IMR-90 (cell line): ENCODE measurements at regions of chr12 and their contacts with region 1.

Region 1: GRCh38 chr12:2284857-2285256 is 232.1 kb downstream of the CACNA1C start:
- DNase-seq: peak; percentile 73
- ATAC-seq: peak; percentile 77
- H3K4me3 ChIP-seq: no peak overlapping the region
- H3K27ac ChIP-seq: peak overlapping the region; percentile 64
- H3K4me1 ChIP-seq: peaks cover 44% of the 10 kb centered on the region
- H3K27me3 ChIP-seq: no peaks in the 10 kb centered on the region
- CTCF ChIP-seq: peak; percentile 72
- POLR2A ChIP-seq: no peak
- RAD21 ChIP-seq: peak; percentile 77

Region 2: DNA sequence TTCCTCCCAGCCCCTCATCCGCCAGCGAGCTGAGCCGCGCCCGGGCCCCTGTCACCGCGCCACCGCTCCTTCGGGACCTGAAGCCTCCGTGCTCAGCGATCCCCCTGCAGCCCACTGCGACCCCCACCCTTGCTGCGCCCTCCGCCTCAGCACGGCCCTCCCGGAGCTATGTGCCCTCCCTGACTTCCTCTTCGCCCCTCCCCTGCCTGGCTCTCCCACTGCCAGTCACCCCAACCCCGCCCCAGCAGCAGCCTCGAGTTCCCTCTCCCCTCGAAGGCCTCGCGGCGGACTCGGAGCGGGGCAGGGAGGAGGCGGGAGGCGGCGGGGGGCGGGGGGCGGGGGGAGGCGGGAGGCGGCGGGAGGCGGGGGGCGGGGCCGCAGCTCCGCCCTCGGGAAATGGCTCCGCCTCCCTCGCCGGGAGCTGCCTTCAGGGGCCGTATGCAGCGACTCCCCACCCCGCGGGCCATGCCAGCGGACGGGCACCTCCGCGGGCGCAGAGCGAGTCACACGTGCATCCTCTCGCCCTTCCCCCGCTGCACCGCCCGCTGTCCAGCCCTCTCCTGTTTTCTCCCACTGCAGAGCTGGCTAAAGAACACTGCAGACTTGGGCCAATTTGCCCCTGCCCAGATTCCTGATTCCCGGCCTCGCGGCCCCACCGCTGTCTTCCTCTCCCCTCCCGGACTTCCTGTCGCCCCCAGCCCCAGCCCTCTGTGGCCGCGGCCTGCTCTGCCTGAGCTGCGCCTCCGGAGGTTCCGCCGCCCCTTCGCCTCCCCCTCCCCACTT is 623.1 kb before region 1 on chr12:
- CTCF ChIA-PET with region 1: interaction called, 5 read pairs
- POLR2A ChIA-PET with region 1: no interaction called
- dilution Hi-C with region 1: no loop called
- in situ Hi-C with region 1: loop called (anchors 25 kb)
- intact Hi-C with region 1: no loop called
- DNase-seq: peak; percentile 82
- ATAC-seq: peak; percentile 92
- H3K4me3 ChIP-seq: peak overlapping the region; percentile 45
- H3K27ac ChIP-seq: peak overlapping the region; percentile 5; the same call in 1 of the 2 replicates
- H3K4me1 ChIP-seq: peaks cover 2% of the 10 kb centered on the region; the same call in 1 of the 2 replicates
- H3K27me3 ChIP-seq: no peaks in the 10 kb centered on the region; the same call in 1 of the 2 replicates
- CTCF ChIP-seq: no peak
- POLR2A ChIP-seq: no peak
- RAD21 ChIP-seq: peak; percentile 9; the same call in 1 of the 2 replicates

Region 3: GRCh38 chr12:1939801-1940607 is 344.9 kb before region 1 on chr12:
- CTCF ChIA-PET with region 1: interaction called, 4 read pairs
- POLR2A ChIA-PET with region 1: no interaction called
- dilution Hi-C with region 1: no loop called
- in situ Hi-C with region 1: no loop called
- intact Hi-C with region 1: loop called (anchors 10 kb)
- DNase-seq: peak; percentile 78
- ATAC-seq: peak; percentile 83
- H3K4me3 ChIP-seq: no peak overlapping the region
- H3K27ac ChIP-seq: no peak overlapping the region
- H3K4me1 ChIP-seq: peaks cover 12% of the 10 kb centered on the region
- H3K27me3 ChIP-seq: no peaks in the 10 kb centered on the region
- CTCF ChIP-seq: peak; percentile 97
- POLR2A ChIP-seq: no peak
- RAD21 ChIP-seq: peak; percentile 93

Region 4: GRCh38 chr12:2179953-2180736 is 104.7 kb before region 1 on chr12:
- CTCF ChIA-PET with region 1: interaction called, 3 read pairs
- POLR2A ChIA-PET with region 1: no interaction called
- dilution Hi-C with region 1: no loop called
- in situ Hi-C with region 1: no loop called
- intact Hi-C with region 1: loop called (anchors 1 kb)
- DNase-seq: peak; percentile 98
- ATAC-seq: peak; percentile 83
- H3K4me3 ChIP-seq: no peak overlapping the region
- H3K27ac ChIP-seq: peak overlapping the region; percentile 68
- H3K4me1 ChIP-seq: peaks cover 24% of the 10 kb centered on the region
- H3K27me3 ChIP-seq: no peaks in the 10 kb centered on the region
- CTCF ChIP-seq: no peak
- POLR2A ChIP-seq: no peak
- RAD21 ChIP-seq: peak; percentile 27; the same call in 1 of the 2 replicates

Region 5: GRCh38 chr12:2242216-2242615 is 42.6 kb before region 1 on chr12:
- CTCF ChIA-PET with region 1: no interaction called
- POLR2A ChIA-PET with region 1: no interaction called
- dilution Hi-C with region 1: no loop called
- in situ Hi-C with region 1: no loop called
- intact Hi-C with region 1: no loop called
- DNase-seq: no peak
- ATAC-seq: no peak
- H3K4me3 ChIP-seq: no peak overlapping the region
- H3K27ac ChIP-seq: no peak overlapping the region
- H3K4me1 ChIP-seq: peaks cover 29% of the 10 kb centered on the region
- H3K27me3 ChIP-seq: no peaks in the 10 kb centered on the region
- CTCF ChIP-seq: no peak
- POLR2A ChIP-seq: no peak
- RAD21 ChIP-seq: no peak

Region 6: DNA sequence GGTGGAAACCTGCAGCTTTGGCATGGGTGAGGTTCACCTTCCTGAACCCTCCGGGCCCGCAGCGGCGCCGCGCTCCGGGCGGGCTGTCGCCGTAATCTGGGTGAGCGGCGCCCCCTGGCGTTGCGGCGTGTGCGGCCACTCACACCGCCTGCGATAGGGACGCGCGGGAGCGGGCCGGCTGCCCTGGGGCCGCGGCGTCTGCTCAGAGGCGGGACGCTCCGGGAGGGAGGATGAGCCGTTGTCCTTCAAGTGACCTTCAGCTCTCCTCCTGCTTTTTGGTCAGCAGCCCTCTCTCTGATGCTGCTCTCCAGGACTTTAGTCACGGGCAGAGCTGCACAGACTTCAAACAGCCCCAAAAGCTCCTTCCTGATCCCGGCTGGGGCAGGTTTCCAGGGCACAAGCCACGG is 298.2 kb after region 1 on chr12:
- CTCF ChIA-PET with region 1: interaction called, 5 read pairs
- POLR2A ChIA-PET with region 1: no interaction called
- dilution Hi-C with region 1: no loop called
- in situ Hi-C with region 1: loop called (anchors 10 kb)
- intact Hi-C with region 1: loop called (anchors 2 kb)
- DNase-seq: peak; percentile 36
- ATAC-seq: peak; percentile 93
- H3K4me3 ChIP-seq: no peak overlapping the region
- H3K27ac ChIP-seq: no peak overlapping the region
- H3K4me1 ChIP-seq: peaks cover 10% of the 10 kb centered on the region
- H3K27me3 ChIP-seq: no peaks in the 10 kb centered on the region
- CTCF ChIP-seq: peak; percentile 90
- POLR2A ChIP-seq: no peak
- RAD21 ChIP-seq: peak; percentile 93